GM18951 (cell line): ENCODE measurements at regions of chr4 and their contacts with region 1.

Region 1: DNA sequence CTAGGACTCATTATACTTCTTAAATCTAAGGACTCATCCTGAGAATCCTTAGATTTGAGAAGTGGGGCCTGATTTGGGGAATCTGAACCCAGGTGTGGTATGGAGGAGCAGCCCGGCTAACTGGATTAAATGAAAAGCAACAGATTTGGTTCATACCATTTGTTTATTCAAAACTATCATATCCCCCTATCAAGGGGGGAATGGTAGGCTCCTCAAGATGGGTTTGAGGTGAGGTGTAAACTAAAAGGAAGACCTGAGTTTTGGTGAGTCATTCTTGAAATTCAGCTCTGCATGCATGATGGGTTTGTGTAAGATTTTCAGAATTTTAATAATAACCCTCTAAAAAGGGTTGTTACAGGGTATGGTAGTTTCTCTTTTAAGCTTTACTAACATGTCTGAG is 53.4 kb downstream of the CASP6 start:
- POLR2A ChIP-seq: no peak

Region 2: GRCh38 chr4:109433205-109434006 is 216.5 kb before region 1 on chr4 and contains the start of gene SEC24B:
- in situ Hi-C with region 1: loop called (anchors 25 kb)
- POLR2A ChIP-seq: peak; percentile 83

Region 3: DNA sequence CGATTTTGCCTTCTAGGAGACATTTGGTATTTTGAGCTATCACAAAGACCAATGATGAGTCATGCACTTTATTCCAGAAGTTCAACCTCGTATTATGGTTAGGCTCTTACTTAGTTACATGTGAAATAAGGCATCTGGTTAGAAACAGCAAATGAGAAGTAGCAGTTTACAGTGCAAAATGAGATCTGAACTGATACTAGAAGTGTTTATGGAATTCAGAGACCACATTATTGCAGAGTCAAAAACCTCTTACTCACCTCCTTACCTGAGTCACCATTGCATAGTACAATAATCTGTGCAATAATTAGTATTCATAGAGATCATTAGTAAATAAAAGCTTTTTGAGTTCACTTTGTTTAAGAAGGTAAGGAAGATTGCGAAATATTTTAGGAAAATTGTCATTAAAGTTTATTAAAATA is 177.5 kb before region 1 on chr4:
- in situ Hi-C with region 1: no loop called
- POLR2A ChIP-seq: no peak

Region 4: DNA sequence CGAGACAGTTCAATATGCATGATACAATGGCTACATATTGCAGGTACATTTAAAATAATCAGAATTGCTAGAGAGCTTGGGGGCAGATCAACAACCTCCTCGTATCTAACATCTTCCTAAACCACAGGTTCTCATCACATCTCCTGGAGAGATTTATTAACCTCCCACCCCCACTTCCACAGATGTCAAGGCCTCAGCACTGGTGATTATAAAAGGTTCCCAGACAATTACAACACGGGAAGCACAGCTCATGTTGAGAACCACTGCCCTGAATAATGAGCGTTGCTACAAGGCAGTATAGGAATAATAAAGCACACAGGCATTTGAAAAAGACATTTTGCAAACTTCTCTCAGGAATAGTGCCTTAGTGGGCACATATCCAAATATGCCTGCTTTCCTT is 505.8 kb after region 1 on chr4:
- in situ Hi-C with region 1: no loop called
- POLR2A ChIP-seq: no peak